Naive thymus-derived CD4-positive, alpha-beta T cell (primary cell): ENCODE measurements at regions of chr14 and their contacts with region 1.

Region 1: GRCh38 chr14:89365061-89365801 is 51.8 kb downstream of the FOXN3 start:
- DNase-seq: peak in 8 of 9 donors; percentile 39 to 82 (median 66)
- ATAC-seq: peak; percentile 96
- H3K4me3 ChIP-seq: peak overlapping the region; percentile 20
- H3K4me3 Mint-ChIP-seq: peak overlapping the region; percentile 79 to 91 (median 86)
- H3K27ac ChIP-seq: peak overlapping the region; percentile 77
- H3K27ac Mint-ChIP-seq: peak overlapping the region; percentile 84 to 97 (median 92)
- H3K4me1 ChIP-seq: peaks cover 18 to 26% of the 10 kb centered on the region in 2 donors
- H3K4me1 Mint-ChIP-seq: peaks cover 38 to 73% (median 63%) of the 10 kb centered on the region in 7 donors
- H3K27me3 ChIP-seq: no peaks in the 10 kb centered on the region
- H3K27me3 Mint-ChIP-seq: no peaks in the 10 kb centered on the region

Region 2: GRCh38 chr14:89303457-89304435 is 61.5 kb before region 1 on chr14:
- CTCF ChIA-PET with region 1: no interaction called
- POLR2A ChIA-PET with region 1: no interaction called
- intact Hi-C with region 1: loop called in 1 of 2 experiments (anchors 2 kb)
- DNase-seq: peak in 8 of 9 donors; percentile 21 to 63 (median 45)
- ATAC-seq: peak; percentile 76
- H3K4me3 ChIP-seq: no peak overlapping the region
- H3K4me3 Mint-ChIP-seq: peak overlapping the region; percentile 63 to 83 (median 73)
- H3K27ac ChIP-seq: peak overlapping the region; percentile 11
- H3K27ac Mint-ChIP-seq: peak overlapping the region; percentile 76 to 95 (median 84)
- H3K4me1 ChIP-seq: peaks cover 0 to 20% of the 10 kb centered on the region in 2 donors
- H3K4me1 Mint-ChIP-seq: peaks cover 38 to 82% (median 78%) of the 10 kb centered on the region in 7 donors
- H3K27me3 ChIP-seq: no peaks in the 10 kb centered on the region
- H3K27me3 Mint-ChIP-seq: no peaks in the 10 kb centered on the region

Region 3: GRCh38 chr14:89351516-89352404 is 13.5 kb before region 1 on chr14:
- CTCF ChIA-PET with region 1: no interaction called
- POLR2A ChIA-PET with region 1: interaction called, 8 read pairs
- intact Hi-C with region 1: loop called in 1 of 2 experiments (anchors 2 kb)
- DNase-seq: peak in 5 of 9 donors; percentile 4 to 27 (median 16)
- ATAC-seq: no peak
- H3K4me3 ChIP-seq: peak overlapping the region; percentile 6
- H3K4me3 Mint-ChIP-seq: peak overlapping the region; percentile 68 to 86 (median 78)
- H3K27ac ChIP-seq: peak overlapping the region; percentile 48
- H3K27ac Mint-ChIP-seq: peak overlapping the region; percentile 68 to 96 (median 89)
- H3K4me1 ChIP-seq: peaks cover 23 to 26% of the 10 kb centered on the region in 2 donors
- H3K4me1 Mint-ChIP-seq: peaks cover 47 to 79% (median 72%) of the 10 kb centered on the region in 7 donors
- H3K27me3 ChIP-seq: no peaks in the 10 kb centered on the region
- H3K27me3 Mint-ChIP-seq: no peaks in the 10 kb centered on the region

Region 4: GRCh38 chr14:89399594-89400068 is 34.4 kb after region 1 on chr14:
- CTCF ChIA-PET with region 1: no interaction called
- POLR2A ChIA-PET with region 1: no interaction called
- intact Hi-C with region 1: no loop called
- DNase-seq: no peak
- ATAC-seq: peak; percentile 38
- H3K4me3 ChIP-seq: no peak overlapping the region
- H3K4me3 Mint-ChIP-seq: peak overlapping the region in 2 of 10 donors; percentile 17 to 27
- H3K27ac ChIP-seq: no peak overlapping the region
- H3K27ac Mint-ChIP-seq: peak overlapping the region in 7 of 9 donors; percentile 17 to 54 (median 33)
- H3K4me1 ChIP-seq: peaks cover 0 to 8% of the 10 kb centered on the region in 2 donors
- H3K4me1 Mint-ChIP-seq: peaks cover 41 to 90% (median 85%) of the 10 kb centered on the region in 7 donors
- H3K27me3 ChIP-seq: no peaks in the 10 kb centered on the region
- H3K27me3 Mint-ChIP-seq: no peaks in the 10 kb centered on the region